ENCODE measurements at regions of chr13 and their contacts with region 1.

Region 1: GRCh38 chr13:36829753-36830152 is 10.7 kb downstream of the RFXAP start:
- DNase-seq: no peak
- H3K4me3 Mint-ChIP-seq: no peak overlapping the region
- H3K27ac Mint-ChIP-seq: no peak overlapping the region
- H3K4me1 Mint-ChIP-seq: peaks cover 9% of the 10 kb centered on the region
- H3K27me3 Mint-ChIP-seq: no peaks in the 10 kb centered on the region

Region 2: DNA sequence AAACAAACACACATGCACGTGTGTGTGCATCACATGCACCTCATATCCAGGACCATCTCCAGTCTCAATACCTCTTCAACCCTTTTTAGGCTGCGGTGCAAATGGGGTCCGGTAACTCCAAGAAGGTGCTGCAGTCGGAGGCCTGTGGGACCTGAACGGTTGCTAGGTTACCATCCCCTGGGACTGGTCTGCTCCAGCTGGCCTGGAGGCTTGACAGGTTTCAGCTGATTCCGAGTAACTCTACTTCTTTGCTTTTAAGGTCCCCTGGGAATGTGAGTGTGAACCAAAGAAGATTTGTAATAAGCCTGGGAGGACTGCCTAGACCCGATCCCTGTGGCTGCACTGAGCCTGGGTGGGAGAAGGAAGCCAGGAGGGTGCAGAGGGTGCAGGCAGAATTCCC is 280.0 kb before region 1 on chr13:
- CTCF ChIA-PET with region 1: no interaction called
- POLR2A ChIA-PET with region 1: no interaction called
- DNase-seq: no peak
- H3K4me3 Mint-ChIP-seq: no peak overlapping the region
- H3K27ac Mint-ChIP-seq: no peak overlapping the region
- H3K4me1 Mint-ChIP-seq: no peaks in the 10 kb centered on the region
- H3K27me3 Mint-ChIP-seq: no peaks in the 10 kb centered on the region

Region 3: GRCh38 chr13:36818804-36819738 is 10.7 kb before region 1 on chr13 and contains the start of gene RFXAP:
- CTCF ChIA-PET with region 1: interaction called, 7 read pairs
- POLR2A ChIA-PET with region 1: interaction called, 11 read pairs
- DNase-seq: peak; percentile 92
- H3K4me3 Mint-ChIP-seq: peak within 1 kb of the TSS; percentile 94
- H3K27ac Mint-ChIP-seq: peak within 1 kb of the TSS; percentile 93
- H3K4me1 Mint-ChIP-seq: peaks cover 48% of the 10 kb centered on the region
- H3K27me3 Mint-ChIP-seq: peaks cover 16% of the 10 kb centered on the region
- total RNA-seq, gene RFXAP: 15.3 to 16.1 TPM